HepG2 (cell line): ENCODE measurements at regions of chr2 and their contacts with region 1.

Region 1: DNA sequence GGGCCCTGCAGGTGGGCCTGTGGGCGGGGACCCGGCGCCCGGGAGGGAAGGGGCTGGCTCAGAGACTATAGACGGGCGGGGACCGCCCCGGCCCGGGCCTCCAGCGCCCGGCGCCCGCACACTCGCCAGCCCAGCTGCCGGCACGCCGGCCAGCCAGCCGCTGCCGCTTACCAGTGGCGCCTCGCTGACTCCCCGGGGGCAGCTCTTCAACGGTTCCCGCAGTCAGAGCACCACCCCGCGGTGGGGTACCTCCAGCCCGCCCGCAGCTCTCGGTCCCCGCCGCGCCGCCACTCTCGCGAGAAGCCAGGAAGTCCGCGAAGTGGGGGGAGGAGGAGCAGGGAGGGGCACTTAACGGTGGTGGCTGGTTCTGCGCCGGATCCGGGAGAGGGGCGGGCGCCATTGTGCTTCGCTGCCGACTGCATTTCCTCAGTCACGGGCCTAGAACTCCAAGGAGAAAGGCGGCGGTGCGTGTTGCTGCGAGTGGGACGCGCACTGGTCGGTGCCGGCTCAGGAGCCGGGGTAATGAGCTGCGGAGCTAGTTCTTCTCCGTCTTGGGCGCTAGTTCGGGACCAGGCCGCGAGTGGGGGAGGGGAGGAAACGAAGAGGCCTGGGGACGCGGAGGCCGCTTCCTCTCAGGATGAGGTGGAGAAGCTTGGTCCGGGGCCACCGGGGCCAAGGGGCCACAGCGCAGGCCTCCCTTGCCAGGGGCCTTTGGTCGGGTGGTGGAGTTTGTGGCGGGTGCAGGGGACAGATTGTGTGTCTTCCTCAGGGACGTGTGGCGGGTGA is at the start of gene MARCHF7:
- DNase-seq: peak; percentile 95
- ATAC-seq: peak; percentile 97
- H3K4me3 ChIP-seq: peak within 1 kb of the TSS; percentile 87 to 99 (median 99)
- H3K27ac ChIP-seq: peak within 1 kb of the TSS; percentile 94
- H3K4me1 ChIP-seq: peaks cover 37% of the 10 kb centered on the region
- H3K27me3 ChIP-seq: no peaks in the 10 kb centered on the region; a peak in 1 of 5 replicates
- CTCF ChIP-seq: peak; percentile 98
- EP300 ChIP-seq: peak; percentile 26 to 64; a peak in 2 of 4 replicates
- POLR2A ChIP-seq: peak; percentile 98
- RAD21 ChIP-seq: peak; percentile 99
- total RNA-seq, gene MARCHF7: 88.5 and 156 TPM in 2 replicates

Region 2: DNA sequence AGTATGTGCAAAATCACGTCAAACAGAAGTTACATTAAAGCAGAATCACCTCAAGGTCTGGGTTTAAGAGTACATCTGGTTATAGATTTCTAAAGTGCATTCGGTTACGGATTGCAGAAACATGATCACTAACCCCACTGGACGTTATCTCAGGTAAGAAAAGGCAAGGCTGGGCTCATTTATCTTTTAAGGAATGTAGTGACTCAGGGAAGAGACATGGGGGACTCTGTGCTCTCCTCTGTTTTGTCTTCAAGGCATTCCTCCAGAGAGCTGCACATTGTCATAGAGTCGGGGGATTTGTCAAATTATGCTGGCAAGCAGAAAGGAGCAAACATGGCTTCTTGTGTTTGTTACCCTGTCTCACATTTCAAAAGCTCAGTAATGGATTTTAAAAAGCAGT is 440.2 kb before region 1 on chr2:
- CTCF ChIA-PET with region 1: no interaction called
- POLR2A ChIA-PET with region 1: no interaction called
- in situ Hi-C with region 1: no loop called
- intact Hi-C with region 1: no loop called
- DNase-seq: no peak
- ATAC-seq: no peak
- H3K4me3 ChIP-seq: no peak overlapping the region
- H3K27ac ChIP-seq: no peak overlapping the region
- H3K4me1 ChIP-seq: no peaks in the 10 kb centered on the region
- H3K27me3 ChIP-seq: no peaks in the 10 kb centered on the region
- CTCF ChIP-seq: no peak
- EP300 ChIP-seq: no peak
- POLR2A ChIP-seq: no peak
- RAD21 ChIP-seq: no peak

Region 3: GRCh38 chr2:159286709-159287441 is 425.5 kb before region 1 on chr2:
- CTCF ChIA-PET with region 1: no interaction called
- POLR2A ChIA-PET with region 1: interaction called, 15 read pairs
- in situ Hi-C with region 1: no loop called
- intact Hi-C with region 1: loop called (anchors 1 kb)
- DNase-seq: peak; percentile 97
- ATAC-seq: peak; percentile 91
- H3K4me3 ChIP-seq: peak overlapping the region; percentile 67 to 93 (median 73)
- H3K27ac ChIP-seq: peak overlapping the region; percentile 96
- H3K4me1 ChIP-seq: peaks cover 39% of the 10 kb centered on the region
- H3K27me3 ChIP-seq: no peaks in the 10 kb centered on the region; a peak in 1 of 5 replicates
- CTCF ChIP-seq: peak; percentile 34; the same call in 1 of the 2 replicates
- EP300 ChIP-seq: peak in 1 of 2 experiments; percentile 8; a peak in 1 of 4 replicates
- POLR2A ChIP-seq: peak; percentile 92 to 96
- RAD21 ChIP-seq: peak; percentile 49; the same call in 1 of the 2 replicates

Region 4: DNA sequence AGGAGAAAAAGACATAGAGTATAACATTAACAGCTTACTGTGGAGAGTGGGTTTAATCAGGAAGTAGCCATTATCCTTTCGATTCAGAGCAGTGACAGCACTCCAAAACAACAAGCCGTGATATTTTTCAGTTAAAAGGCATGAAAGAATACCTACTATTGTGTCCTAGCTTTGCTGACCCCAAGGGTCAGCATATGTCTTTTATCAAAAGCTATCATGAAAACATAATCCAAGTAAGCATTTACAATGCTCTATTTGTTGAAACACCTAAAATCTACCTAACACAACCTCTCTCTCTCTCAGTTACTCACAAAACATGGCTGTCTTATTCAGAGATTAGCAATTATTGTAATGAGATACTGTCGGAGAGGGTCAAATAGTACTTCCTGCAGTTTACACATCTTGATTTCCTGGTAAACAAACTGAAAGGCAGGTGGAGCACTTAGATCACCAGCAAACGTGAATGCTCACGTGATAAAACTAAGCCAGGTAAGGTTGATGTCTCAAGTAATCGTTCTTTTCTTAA is 196.0 kb before region 1 on chr2:
- CTCF ChIA-PET with region 1: no interaction called
- POLR2A ChIA-PET with region 1: no interaction called
- in situ Hi-C with region 1: no loop called
- intact Hi-C with region 1: loop called (anchors 2 kb)
- DNase-seq: peak; percentile 35
- ATAC-seq: peak; percentile 84
- H3K4me3 ChIP-seq: peak overlapping the region; percentile 37 to 54 (median 53); a peak in 5 of 6 replicates
- H3K27ac ChIP-seq: peak overlapping the region; percentile 39
- H3K4me1 ChIP-seq: peaks cover 7% of the 10 kb centered on the region
- H3K27me3 ChIP-seq: no peaks in the 10 kb centered on the region
- CTCF ChIP-seq: peak; percentile 42
- EP300 ChIP-seq: no peak
- POLR2A ChIP-seq: no peak
- RAD21 ChIP-seq: no peak

Region 5: DNA sequence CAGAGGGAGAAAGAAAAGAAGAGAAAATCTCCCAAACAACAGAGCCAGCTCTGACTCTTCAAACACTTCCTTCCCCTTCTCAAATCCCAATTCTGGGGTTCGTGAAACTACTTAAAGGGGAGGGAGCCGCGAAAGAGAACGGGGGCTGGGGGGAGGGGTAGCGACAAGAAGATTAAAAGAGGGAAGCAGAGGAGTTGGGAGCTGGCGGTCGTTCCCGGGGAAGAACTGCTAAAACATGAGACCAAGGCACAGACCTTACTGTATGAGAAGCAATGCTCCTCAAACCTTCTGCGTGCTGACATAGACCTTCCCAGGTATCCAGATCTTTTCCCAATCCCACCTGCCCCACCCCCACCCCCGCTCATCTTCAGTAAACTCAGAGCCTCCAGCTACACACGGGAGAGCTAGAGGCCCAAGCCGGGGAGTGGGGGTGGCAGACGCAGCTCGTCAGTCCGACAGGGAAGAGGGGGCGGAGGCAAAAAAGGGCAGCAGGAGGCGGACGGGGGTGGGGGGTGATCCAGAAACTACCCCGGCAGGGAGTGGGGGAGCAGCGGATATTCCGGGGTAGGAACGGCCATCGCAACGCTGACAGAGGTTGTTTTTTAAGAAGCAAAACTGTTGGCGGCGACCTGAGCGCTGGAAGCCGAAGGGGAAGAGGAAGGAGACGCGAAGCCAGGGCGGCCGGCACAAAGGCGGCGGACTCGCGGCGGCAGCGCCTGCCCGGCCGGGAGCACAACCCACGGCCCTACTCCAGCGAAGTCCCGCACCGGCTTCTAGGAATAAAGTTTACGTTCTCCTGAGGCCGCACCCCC is 97.0 kb before region 1 on chr2:
- CTCF ChIA-PET with region 1: no interaction called
- POLR2A ChIA-PET with region 1: interaction called, 66 read pairs
- in situ Hi-C with region 1: no loop called
- intact Hi-C with region 1: loop called (anchors 1 kb)
- DNase-seq: peak; percentile 90
- ATAC-seq: peak; percentile 94
- H3K4me3 ChIP-seq: peak overlapping the region; percentile 76 to 100 (median 90)
- H3K27ac ChIP-seq: peak overlapping the region; percentile 99
- H3K4me1 ChIP-seq: peaks cover 46% of the 10 kb centered on the region
- H3K27me3 ChIP-seq: no peaks in the 10 kb centered on the region; a peak in 1 of 5 replicates
- CTCF ChIP-seq: no peak
- EP300 ChIP-seq: peak; percentile 39 to 59; a peak in 1 of 4 replicates
- POLR2A ChIP-seq: peak; percentile 79 to 87
- RAD21 ChIP-seq: no peak

Region 6: GRCh38 chr2:159797543-159798375 is 85.4 kb after region 1 on chr2 and contains the start of gene CD302:
- CTCF ChIA-PET with region 1: no interaction called
- POLR2A ChIA-PET with region 1: interaction called, 4 read pairs
- in situ Hi-C with region 1: no loop called
- intact Hi-C with region 1: loop called (anchors 5 kb)
- DNase-seq: peak; percentile 68
- ATAC-seq: peak; percentile 89
- H3K4me3 ChIP-seq: peak within 1 kb of the TSS; percentile 69 to 92 (median 74)
- H3K27ac ChIP-seq: peak within 1 kb of the TSS; percentile 79
- H3K4me1 ChIP-seq: peaks cover 43% of the 10 kb centered on the region
- H3K27me3 ChIP-seq: no peaks in the 10 kb centered on the region
- CTCF ChIP-seq: no peak
- EP300 ChIP-seq: 0 out of 4 replicates have a peak, but pooled peaks of 1 of the 2 experiments have one; percentile 45
- POLR2A ChIP-seq: peak; percentile 55 to 56; a peak in 3 of 4 replicates
- RAD21 ChIP-seq: peak; percentile 51; the same call in 1 of the 2 replicates
- total RNA-seq, gene CD302: 5.6 and 8.0 TPM in 2 replicates

Region 7: DNA sequence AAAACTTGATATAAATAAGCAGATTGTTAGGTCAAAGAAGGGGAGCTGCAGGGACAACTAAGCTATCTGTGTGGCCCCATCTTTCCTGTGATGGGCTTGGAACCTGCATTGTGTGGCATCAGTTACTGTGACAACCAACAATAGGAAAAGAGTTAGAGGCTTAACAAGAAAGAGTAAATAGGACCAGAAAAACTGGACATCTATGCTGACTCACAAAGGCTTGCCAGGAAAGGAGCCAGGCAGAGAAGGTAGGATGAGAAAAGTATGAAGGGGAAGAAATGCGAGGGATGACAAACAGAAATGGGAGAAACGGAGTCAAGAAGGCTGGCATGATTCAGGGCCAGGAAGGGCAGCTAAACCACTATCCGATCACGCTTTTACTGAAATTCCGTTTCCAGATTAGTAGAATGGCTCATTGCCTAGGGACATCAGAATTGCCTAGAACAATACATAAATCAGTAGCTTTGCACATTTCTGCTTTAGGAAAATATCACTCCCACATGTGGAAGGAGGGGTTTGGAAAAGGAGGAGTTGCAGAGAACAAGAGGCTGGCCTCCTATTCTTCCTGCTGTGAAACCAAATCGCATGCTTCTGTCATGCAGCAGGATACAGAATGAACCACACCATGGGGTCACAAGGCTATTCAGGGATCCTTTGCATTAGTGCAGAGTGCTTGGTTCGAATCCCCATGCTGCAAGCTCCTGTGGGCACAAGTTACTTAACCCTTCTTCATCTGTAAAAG is 342.8 kb after region 1 on chr2:
- CTCF ChIA-PET with region 1: no interaction called
- POLR2A ChIA-PET with region 1: no interaction called
- in situ Hi-C with region 1: no loop called
- intact Hi-C with region 1: no loop called
- DNase-seq: no peak
- ATAC-seq: no peak
- H3K4me3 ChIP-seq: no peak overlapping the region
- H3K27ac ChIP-seq: no peak overlapping the region
- H3K4me1 ChIP-seq: peaks cover 11% of the 10 kb centered on the region; the same call in 1 of the 2 replicates
- H3K27me3 ChIP-seq: peaks cover 0 to 13% of the 10 kb centered on the region in 2 experiments; a peak in 3 of 5 replicates
- CTCF ChIP-seq: no peak
- EP300 ChIP-seq: no peak
- POLR2A ChIP-seq: no peak
- RAD21 ChIP-seq: no peak